Activated CD4-positive, alpha-beta T cell treated with anti-CD3 and anti-CD28 coated beads for 36 hours (primary cell): ENCODE measurements at regions of chr1 and their contacts with region 1.

Region 1: GRCh38 chr1:3012456-3013291 is 8.6 kb upstream of the ACTRT2 start:
- DNase-seq: peak; percentile 75
- ATAC-seq: peak; percentile 68
- H3K4me3 Mint-ChIP-seq: no peak overlapping the region
- H3K27ac Mint-ChIP-seq: no peak overlapping the region
- H3K4me1 Mint-ChIP-seq: no peaks in the 10 kb centered on the region
- H3K27me3 Mint-ChIP-seq: peaks cover 4% of the 10 kb centered on the region

Region 2: GRCh38 chr1:1591452-1591851 is 1421.2 kb before region 1 on chr1:
- CTCF ChIA-PET with region 1: no interaction called
- POLR2A ChIA-PET with region 1: no interaction called
- intact Hi-C with region 1: no loop called
- DNase-seq: no peak
- ATAC-seq: peak; percentile 39
- H3K4me3 Mint-ChIP-seq: no peak overlapping the region
- H3K27ac Mint-ChIP-seq: no peak overlapping the region
- H3K4me1 Mint-ChIP-seq: no peaks in the 10 kb centered on the region
- H3K27me3 Mint-ChIP-seq: no peaks in the 10 kb centered on the region

Region 3: GRCh38 chr1:2936559-2937515 is 75.8 kb before region 1 on chr1:
- CTCF ChIA-PET with region 1: no interaction called
- POLR2A ChIA-PET with region 1: no interaction called
- intact Hi-C with region 1: no loop called
- DNase-seq: no peak
- ATAC-seq: no peak
- H3K4me3 Mint-ChIP-seq: no peak overlapping the region
- H3K27ac Mint-ChIP-seq: no peak overlapping the region
- H3K4me1 Mint-ChIP-seq: no peaks in the 10 kb centered on the region
- H3K27me3 Mint-ChIP-seq: peaks cover 3% of the 10 kb centered on the region

Region 4: GRCh38 chr1:3283849-3284248 is 271.2 kb after region 1 on chr1:
- CTCF ChIA-PET with region 1: interaction called, 3 read pairs
- POLR2A ChIA-PET with region 1: no interaction called
- intact Hi-C with region 1: loop called (anchors 1 to 5 kb)
- DNase-seq: peak; percentile 57
- ATAC-seq: no peak
- H3K4me3 Mint-ChIP-seq: no peak overlapping the region
- H3K27ac Mint-ChIP-seq: no peak overlapping the region
- H3K4me1 Mint-ChIP-seq: no peaks in the 10 kb centered on the region
- H3K27me3 Mint-ChIP-seq: peaks cover 3% of the 10 kb centered on the region

Region 5: DNA sequence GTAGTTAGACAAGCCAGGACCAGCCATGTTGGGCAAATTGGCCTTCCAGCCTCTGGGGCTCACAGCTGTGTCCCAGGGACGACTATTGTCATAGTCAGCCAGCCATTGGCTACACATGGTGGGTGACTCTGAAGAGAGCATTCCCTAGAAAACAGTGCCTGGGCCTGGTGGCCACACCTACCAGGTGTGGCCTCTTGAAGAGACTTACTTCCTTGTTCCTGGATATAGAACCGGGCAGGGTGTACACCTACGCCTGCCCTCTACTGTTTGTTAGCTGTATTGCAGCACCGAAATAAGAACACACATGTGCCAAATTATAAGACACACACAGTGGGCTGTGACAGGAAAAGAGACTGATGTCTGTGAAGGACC is 307.2 kb after region 1 on chr1:
- CTCF ChIA-PET with region 1: no interaction called
- POLR2A ChIA-PET with region 1: no interaction called
- intact Hi-C with region 1: loop called (anchors 1 to 2 kb)
- DNase-seq: peak; percentile 71
- ATAC-seq: peak; percentile 70
- H3K4me3 Mint-ChIP-seq: no peak overlapping the region
- H3K27ac Mint-ChIP-seq: no peak overlapping the region
- H3K4me1 Mint-ChIP-seq: peaks cover 16% of the 10 kb centered on the region
- H3K27me3 Mint-ChIP-seq: peaks cover 3% of the 10 kb centered on the region

Region 6: DNA sequence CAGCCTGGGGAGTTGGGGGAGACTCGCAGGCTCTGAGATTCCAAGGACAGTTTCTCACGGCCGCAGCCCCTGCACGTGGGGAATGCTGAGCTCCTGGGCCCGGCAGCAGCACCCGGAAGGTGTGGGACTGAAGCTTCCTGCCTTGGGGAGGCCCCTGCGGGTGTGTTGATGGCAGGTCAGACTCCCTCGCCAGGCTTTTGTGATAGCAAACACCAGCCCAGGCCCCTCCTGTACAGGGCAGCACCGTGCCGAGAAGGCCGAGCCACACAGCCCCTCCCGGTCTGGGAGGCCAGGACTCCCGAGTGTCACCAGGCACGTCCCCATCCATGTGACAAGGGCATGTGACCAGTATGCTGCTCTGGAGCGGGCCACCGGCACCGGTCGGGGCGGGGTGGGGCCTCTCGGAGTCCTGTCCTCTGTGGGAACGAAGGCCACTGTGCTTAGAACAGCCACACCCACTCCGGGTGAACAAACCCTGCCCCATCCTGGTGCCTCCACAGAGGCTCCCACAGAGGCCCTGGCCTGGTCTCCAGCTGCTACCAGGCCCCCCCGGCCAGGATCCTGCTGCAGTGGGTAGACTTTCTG is 410.7 kb after region 1 on chr1:
- CTCF ChIA-PET with region 1: no interaction called
- POLR2A ChIA-PET with region 1: no interaction called
- intact Hi-C with region 1: loop called (anchors 1 to 2 kb)
- DNase-seq: no peak
- ATAC-seq: no peak
- H3K4me3 Mint-ChIP-seq: no peak overlapping the region
- H3K27ac Mint-ChIP-seq: no peak overlapping the region
- H3K4me1 Mint-ChIP-seq: no peaks in the 10 kb centered on the region
- H3K27me3 Mint-ChIP-seq: peaks cover 3% of the 10 kb centered on the region